ENCODE measurements at regions of chr9 and their contacts with region 1.

Region 1: DNA sequence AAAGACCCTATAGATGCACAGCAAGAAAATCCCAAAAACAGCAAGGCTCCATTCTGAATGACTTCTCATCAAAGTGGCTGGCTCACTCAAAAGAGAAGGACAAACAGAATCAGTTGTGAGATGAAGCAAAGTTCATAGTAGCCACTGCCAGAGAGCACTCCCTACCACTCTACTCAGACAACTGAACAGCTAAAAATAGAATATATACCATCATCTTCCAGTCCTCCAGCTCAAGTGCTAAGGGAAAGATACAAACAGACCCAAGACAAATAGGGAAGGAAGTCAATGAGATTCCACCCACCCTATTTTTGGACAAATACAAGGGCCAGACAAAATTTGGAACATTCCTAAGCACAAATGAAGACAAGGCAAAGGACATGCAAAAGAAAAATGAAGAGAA is 20.6 kb downstream of the GNAQ start:
- DNase-seq: no peak
- H3K4me3 Mint-ChIP-seq: no peak overlapping the region
- H3K27ac Mint-ChIP-seq: peak overlapping the region; percentile 77
- H3K4me1 Mint-ChIP-seq: peaks cover 53% of the 10 kb centered on the region
- H3K27me3 Mint-ChIP-seq: no peaks in the 10 kb centered on the region

Region 2: DNA sequence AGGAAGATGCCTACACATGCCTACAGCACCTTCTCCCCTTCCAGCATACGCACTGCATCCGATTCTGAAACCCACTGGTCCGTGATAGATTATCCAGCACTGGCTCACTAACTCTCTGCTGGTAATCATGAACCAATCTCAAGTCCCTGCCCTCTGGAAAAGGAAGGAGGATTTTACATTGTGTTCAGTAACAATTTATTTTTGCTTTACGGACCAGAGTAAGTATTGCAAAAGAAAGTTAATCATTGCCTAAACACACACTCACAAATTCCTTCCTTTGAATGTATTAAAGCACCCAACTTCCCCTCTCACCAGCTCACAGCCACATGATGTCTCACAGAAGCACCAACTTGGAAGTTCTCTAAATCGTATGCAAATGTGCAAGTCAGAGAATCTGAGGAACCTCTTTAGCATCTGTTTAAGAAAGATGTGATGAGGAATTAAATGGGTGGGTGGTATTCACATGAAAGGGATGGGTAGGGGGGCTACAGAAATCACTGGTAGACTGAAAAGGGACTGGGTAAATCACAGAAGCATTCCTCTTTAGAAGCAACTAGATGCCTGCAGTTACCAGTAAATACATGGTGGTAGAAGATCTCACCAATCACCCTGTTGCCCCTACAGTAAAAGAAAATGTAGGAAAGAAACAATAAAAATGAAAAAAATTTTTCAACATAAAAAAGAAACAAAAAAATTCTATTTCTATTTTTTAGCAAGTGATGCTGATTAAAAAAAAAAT is 12.1 kb after region 1 on chr9:
- intact Hi-C with region 1: loop called (anchors 2 kb)
- DNase-seq: no peak
- H3K4me3 Mint-ChIP-seq: no peak overlapping the region
- H3K27ac Mint-ChIP-seq: no peak overlapping the region
- H3K4me1 Mint-ChIP-seq: peaks cover 51% of the 10 kb centered on the region
- H3K27me3 Mint-ChIP-seq: no peaks in the 10 kb centered on the region

Region 3: DNA sequence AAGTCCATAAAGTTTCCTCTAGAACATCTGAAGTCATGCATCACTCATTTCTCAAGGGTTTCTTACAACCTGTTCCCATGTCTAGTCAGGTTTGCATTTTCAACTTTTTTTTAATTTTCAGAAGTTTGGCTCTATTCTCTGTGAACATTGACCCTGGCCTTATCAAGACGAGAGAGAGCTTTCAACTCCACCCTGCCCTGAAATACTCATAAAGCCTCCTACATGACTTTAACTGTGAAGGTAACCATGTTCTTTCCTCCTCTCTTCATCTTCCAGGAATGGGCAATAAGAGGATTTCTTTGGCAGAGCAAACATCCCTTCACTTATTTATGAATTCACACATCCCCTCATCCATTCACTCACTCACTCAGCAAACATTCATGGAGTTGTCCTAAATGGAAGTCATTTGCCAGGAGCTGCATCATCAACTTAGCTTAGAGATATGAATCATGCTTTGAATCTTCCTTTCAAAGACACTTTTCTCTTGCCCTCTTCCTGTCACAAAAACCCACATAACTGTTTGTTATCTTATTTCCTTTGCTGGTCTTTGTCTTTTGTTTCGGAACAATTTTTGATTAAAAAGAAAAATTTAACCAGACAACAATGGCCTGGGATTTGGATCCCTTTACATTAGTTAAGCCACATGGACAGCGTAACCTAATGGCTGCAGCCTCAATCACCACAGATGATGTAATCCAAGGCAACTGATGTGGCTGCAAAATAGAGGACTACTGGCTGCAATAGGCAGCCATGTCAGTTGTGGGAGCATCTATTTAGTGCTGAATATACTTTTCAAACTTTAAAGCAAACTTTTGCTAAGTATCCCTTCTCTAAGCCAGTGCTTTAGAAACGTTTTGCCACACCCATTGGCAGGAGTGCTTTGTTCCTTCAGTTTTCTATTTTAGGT is 63.6 kb after region 1 on chr9:
- intact Hi-C with region 1: no loop called
- DNase-seq: peak; percentile 16
- H3K4me3 Mint-ChIP-seq: peak overlapping the region; percentile 22
- H3K27ac Mint-ChIP-seq: peak overlapping the region; percentile 68
- H3K4me1 Mint-ChIP-seq: peaks cover 47% of the 10 kb centered on the region
- H3K27me3 Mint-ChIP-seq: no peaks in the 10 kb centered on the region

Region 4: GRCh38 chr9:78357165-78357873 is 346.3 kb after region 1 on chr9:
- intact Hi-C with region 1: no loop called
- DNase-seq: no peak
- H3K4me3 Mint-ChIP-seq: no peak overlapping the region
- H3K27ac Mint-ChIP-seq: no peak overlapping the region
- H3K4me1 Mint-ChIP-seq: peaks cover 1% of the 10 kb centered on the region
- H3K27me3 Mint-ChIP-seq: no peaks in the 10 kb centered on the region

Measured in activated T-helper 2 cell treated with anti-CD3 and anti-CD28 coated beads, Interferon-gamma antibody, Interleukin-2, Interleukin-4, amounts not matched to agents 10 μg/mL and 5 μg/mL and 100 μg/mL, durations not matched to agents 14 hours and 24 hours and 36 hours (primary cell).